ENCODE measurements at regions of chr15 and their contacts with region 1.

Region 1: DNA sequence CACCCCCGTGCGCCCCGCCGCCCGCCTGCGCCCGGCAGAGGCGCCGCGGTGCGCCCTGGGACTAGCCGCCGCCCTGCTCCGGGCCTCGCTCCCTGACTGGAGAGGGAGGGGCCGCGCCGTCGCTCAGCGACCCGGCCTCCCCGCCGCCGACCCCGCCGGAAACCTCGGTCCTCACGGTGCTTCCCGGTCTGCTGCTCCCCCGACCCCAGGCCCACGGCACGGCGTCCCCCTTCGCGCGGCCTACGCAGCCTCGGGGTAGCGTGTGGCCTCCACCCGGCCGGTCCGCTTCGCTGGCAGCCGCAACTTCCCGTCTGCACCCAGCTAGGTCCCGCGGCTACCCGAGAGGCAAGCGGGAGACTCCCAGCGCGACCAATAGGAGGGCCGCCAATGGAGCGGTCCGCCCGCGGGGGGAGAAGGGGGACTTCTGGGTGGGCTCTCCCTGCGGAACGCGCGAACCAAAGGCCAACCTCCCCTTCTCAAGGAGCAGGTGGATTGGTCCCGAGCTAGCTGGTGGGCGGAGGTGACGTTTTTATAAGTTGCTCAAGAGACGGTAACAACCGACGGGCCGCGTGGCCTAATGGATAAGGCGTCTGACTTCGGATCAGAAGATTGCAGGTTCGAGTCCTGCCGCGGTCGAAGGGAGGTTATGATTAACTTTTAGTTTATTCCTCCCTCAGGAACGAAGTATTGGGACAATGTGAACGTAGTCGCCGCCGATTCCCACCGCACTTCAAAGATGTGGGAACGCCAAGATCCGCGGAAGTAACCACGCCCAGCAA is at the start of gene POLG:
- DNase-seq: peak; percentile 98 to 100 (median 99)
- ATAC-seq: peak; percentile 91
- H3K4me3 ChIP-seq: peak within 1 kb of the TSS; percentile 92
- H3K4me3 Mint-ChIP-seq: peak within 1 kb of the TSS; percentile 96
- H3K27ac ChIP-seq: peak within 1 kb of the TSS; percentile 55 to 79
- H3K27ac Mint-ChIP-seq: peak within 1 kb of the TSS; percentile 100
- H3K4me1 ChIP-seq: peaks cover 54% of the 10 kb centered on the region
- H3K4me1 Mint-ChIP-seq: peaks cover 56% of the 10 kb centered on the region
- H3K27me3 ChIP-seq: no peaks in the 10 kb centered on the region
- H3K27me3 Mint-ChIP-seq: peaks cover 11% of the 10 kb centered on the region
- CTCF ChIP-seq: no peak
- total RNA-seq, gene POLG: 139 to 140 TPM

Region 2: GRCh38 chr15:88546248-88547129 is 788.2 kb before region 1 on chr15 and contains the start of gene DET1:
- CTCF ChIA-PET with region 1: no interaction called
- POLR2A ChIA-PET with region 1: no interaction called
- intact Hi-C with region 1: loop called in 1 of 2 experiments (anchors 10 kb)
- DNase-seq: peak; percentile 90 to 98 (median 94)
- ATAC-seq: peak; percentile 91
- H3K4me3 ChIP-seq: peak within 1 kb of the TSS; percentile 66
- H3K4me3 Mint-ChIP-seq: peak within 1 kb of the TSS; percentile 91
- H3K27ac ChIP-seq: peak within 1 kb of the TSS; percentile 64 to 74
- H3K27ac Mint-ChIP-seq: peak within 1 kb of the TSS; percentile 95
- H3K4me1 ChIP-seq: peaks cover 10% of the 10 kb centered on the region
- H3K4me1 Mint-ChIP-seq: peaks cover 19% of the 10 kb centered on the region
- H3K27me3 ChIP-seq: no peaks in the 10 kb centered on the region
- H3K27me3 Mint-ChIP-seq: no peaks in the 10 kb centered on the region
- CTCF ChIP-seq: peak; percentile 74
- total RNA-seq, gene DET1: 2.2 to 2.8 TPM

Region 3: GRCh38 chr15:89243691-89244471 is 90.8 kb before region 1 on chr15 and contains the start of gene FANCI:
- CTCF ChIA-PET with region 1: no interaction called
- POLR2A ChIA-PET with region 1: interaction called, 12 read pairs
- intact Hi-C with region 1: loop called in 1 of 2 experiments (anchors 2 kb)
- DNase-seq: peak; percentile 92 to 99 (median 96)
- ATAC-seq: peak; percentile 98
- H3K4me3 ChIP-seq: peak within 1 kb of the TSS; percentile 84
- H3K4me3 Mint-ChIP-seq: peak within 1 kb of the TSS; percentile 92
- H3K27ac ChIP-seq: no peak within 1 kb of the TSS
- H3K27ac Mint-ChIP-seq: peak within 1 kb of the TSS; percentile 83
- H3K4me1 ChIP-seq: peaks cover 26% of the 10 kb centered on the region
- H3K4me1 Mint-ChIP-seq: peaks cover 37% of the 10 kb centered on the region
- H3K27me3 ChIP-seq: no peaks in the 10 kb centered on the region
- H3K27me3 Mint-ChIP-seq: no peaks in the 10 kb centered on the region
- CTCF ChIP-seq: no peak
- total RNA-seq, gene FANCI: 6.1 to 7.1 TPM

Region 4: GRCh38 chr15:89323825-89324224 is 10.9 kb before region 1 on chr15:
- CTCF ChIA-PET with region 1: no interaction called
- POLR2A ChIA-PET with region 1: interaction called, 10 read pairs
- intact Hi-C with region 1: no loop called
- DNase-seq: no peak
- ATAC-seq: no peak
- H3K4me3 ChIP-seq: no peak overlapping the region
- H3K4me3 Mint-ChIP-seq: no peak overlapping the region
- H3K27ac ChIP-seq: no peak overlapping the region
- H3K27ac Mint-ChIP-seq: no peak overlapping the region
- H3K4me1 ChIP-seq: peaks cover 15% of the 10 kb centered on the region
- H3K4me1 Mint-ChIP-seq: peaks cover 6% of the 10 kb centered on the region
- H3K27me3 ChIP-seq: no peaks in the 10 kb centered on the region
- H3K27me3 Mint-ChIP-seq: no peaks in the 10 kb centered on the region
- CTCF ChIP-seq: no peak

Region 5: GRCh38 chr15:89690276-89691218 is 355.8 kb after region 1 on chr15 and contains the starts of genes PEX11A and WDR93:
- CTCF ChIA-PET with region 1: no interaction called
- POLR2A ChIA-PET with region 1: no interaction called
- intact Hi-C with region 1: loop called in 1 of 2 experiments (anchors 10 kb)
- DNase-seq: peak; percentile 58 to 89 (median 71)
- ATAC-seq: peak; percentile 82
- H3K4me3 ChIP-seq: peak within 1 kb of the TSS; percentile 98
- H3K4me3 Mint-ChIP-seq: peak within 1 kb of the TSS; percentile 90
- H3K27ac ChIP-seq: peak within 1 kb of the TSS in 1 of 2 donors; percentile 63
- H3K27ac Mint-ChIP-seq: peak within 1 kb of the TSS; percentile 73
- H3K4me1 ChIP-seq: peaks cover 17% of the 10 kb centered on the region
- H3K4me1 Mint-ChIP-seq: peaks cover 6% of the 10 kb centered on the region
- H3K27me3 ChIP-seq: no peaks in the 10 kb centered on the region
- H3K27me3 Mint-ChIP-seq: peaks cover 5% of the 10 kb centered on the region
- CTCF ChIP-seq: no peak
- total RNA-seq, gene PEX11A: 0.22 TPM
- total RNA-seq, gene WDR93: not detected